ENCODE measurements at regions of chr9 and their contacts with region 1.

Region 1: DNA sequence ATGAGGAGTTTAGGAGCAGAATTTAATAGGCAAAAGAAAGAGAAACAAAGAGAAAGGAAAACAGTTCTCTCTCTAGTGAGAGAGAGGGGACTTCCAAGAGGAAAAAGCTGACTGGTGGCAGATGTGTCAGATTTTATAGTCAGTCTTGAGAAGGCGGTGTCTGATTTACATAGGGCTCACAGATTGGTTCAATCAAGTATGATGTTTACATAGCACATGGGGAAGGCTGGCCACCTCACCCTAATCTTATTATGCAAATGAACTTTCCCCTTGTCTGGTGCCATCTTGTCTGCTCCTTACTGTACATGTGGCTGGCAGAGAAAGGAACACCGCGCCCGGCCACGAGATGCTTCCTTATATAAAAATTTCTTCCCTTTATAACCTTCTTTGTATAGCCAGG is 24.7 kb downstream of the UNC13B start:
- DNase-seq: no peak
- ATAC-seq: no peak
- H3K4me3 Mint-ChIP-seq: no peak overlapping the region
- H3K27ac Mint-ChIP-seq: no peak overlapping the region
- H3K4me1 Mint-ChIP-seq: peaks cover 3% of the 10 kb centered on the region
- H3K27me3 Mint-ChIP-seq: no peaks in the 10 kb centered on the region

Region 2: GRCh38 chr9:34957492-34958410 is 228.8 kb before region 1 on chr9 and contains the start of gene PHF24:
- CTCF ChIA-PET with region 1: no interaction called
- POLR2A ChIA-PET with region 1: no interaction called
- intact Hi-C with region 1: no loop called
- DNase-seq: peak; percentile 46
- ATAC-seq: peak; percentile 49
- H3K4me3 Mint-ChIP-seq: peak within 1 kb of the TSS; percentile 32
- H3K27ac Mint-ChIP-seq: no peak within 1 kb of the TSS
- H3K4me1 Mint-ChIP-seq: peaks cover 24% of the 10 kb centered on the region
- H3K27me3 Mint-ChIP-seq: peaks cover 51% of the 10 kb centered on the region
- total RNA-seq, gene PHF24: 0.09 to 0.18 TPM

Region 3: DNA sequence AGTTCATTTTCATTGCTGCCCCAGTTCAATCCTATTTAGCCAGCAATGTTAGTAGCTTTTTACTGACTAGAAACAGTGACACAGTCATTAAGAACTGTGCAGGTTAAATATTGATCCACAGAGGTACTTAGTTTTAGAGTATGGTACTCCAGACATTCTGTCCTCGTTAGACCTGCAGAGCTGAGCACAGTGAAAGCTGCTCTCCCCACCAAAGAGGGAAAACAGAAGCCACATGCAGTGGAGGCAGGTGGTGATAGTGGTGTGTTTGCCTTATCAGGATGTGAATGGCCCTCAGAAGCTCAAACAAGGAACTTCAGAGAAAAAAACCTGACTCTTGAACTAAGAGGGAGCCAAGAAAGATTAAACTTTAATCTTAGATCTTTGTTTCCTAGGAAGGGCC is 50.8 kb after region 1 on chr9:
- CTCF ChIA-PET with region 1: no interaction called
- POLR2A ChIA-PET with region 1: no interaction called
- intact Hi-C with region 1: loop called in 1 of 2 experiments (anchors 5 kb)
- DNase-seq: no peak
- ATAC-seq: no peak
- H3K4me3 Mint-ChIP-seq: no peak overlapping the region
- H3K27ac Mint-ChIP-seq: no peak overlapping the region
- H3K4me1 Mint-ChIP-seq: no peaks in the 10 kb centered on the region
- H3K27me3 Mint-ChIP-seq: peaks cover 7% of the 10 kb centered on the region

Measured in activated CD4-positive, alpha-beta T cell treated with anti-CD3 and anti-CD28 coated beads for 36 hours (primary cell).